ENCODE measurements at regions of chr1 and their contacts with region 1.

Region 1: DNA sequence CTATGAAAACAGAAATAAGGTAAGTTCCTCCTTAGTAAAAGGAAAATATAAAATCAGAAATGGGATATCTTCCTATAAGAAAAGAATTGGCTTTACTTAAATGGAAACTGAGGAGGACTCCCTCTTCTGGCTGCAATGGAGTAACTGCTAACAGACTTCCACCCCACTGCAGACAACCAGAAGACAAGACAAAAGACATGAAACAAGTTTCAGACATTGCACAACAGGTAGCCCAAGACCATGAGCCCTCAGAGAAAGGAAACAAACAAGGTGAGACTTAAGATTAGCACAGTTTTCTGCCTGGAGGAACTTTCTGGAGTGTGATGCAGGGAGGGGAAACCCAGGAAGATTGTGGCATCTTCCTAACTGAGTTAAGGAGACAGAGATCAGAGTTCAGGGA is 17.0 kb upstream of the OLFML2B start:
- DNase-seq: no peak
- ATAC-seq: peak; percentile 71
- H3K4me3 Mint-ChIP-seq: no peak overlapping the region
- H3K27ac Mint-ChIP-seq: no peak overlapping the region
- H3K4me1 Mint-ChIP-seq: peaks cover 3% of the 10 kb centered on the region
- H3K27me3 Mint-ChIP-seq: no peaks in the 10 kb centered on the region
- CTCF ChIP-seq: no peak

Region 2: DNA sequence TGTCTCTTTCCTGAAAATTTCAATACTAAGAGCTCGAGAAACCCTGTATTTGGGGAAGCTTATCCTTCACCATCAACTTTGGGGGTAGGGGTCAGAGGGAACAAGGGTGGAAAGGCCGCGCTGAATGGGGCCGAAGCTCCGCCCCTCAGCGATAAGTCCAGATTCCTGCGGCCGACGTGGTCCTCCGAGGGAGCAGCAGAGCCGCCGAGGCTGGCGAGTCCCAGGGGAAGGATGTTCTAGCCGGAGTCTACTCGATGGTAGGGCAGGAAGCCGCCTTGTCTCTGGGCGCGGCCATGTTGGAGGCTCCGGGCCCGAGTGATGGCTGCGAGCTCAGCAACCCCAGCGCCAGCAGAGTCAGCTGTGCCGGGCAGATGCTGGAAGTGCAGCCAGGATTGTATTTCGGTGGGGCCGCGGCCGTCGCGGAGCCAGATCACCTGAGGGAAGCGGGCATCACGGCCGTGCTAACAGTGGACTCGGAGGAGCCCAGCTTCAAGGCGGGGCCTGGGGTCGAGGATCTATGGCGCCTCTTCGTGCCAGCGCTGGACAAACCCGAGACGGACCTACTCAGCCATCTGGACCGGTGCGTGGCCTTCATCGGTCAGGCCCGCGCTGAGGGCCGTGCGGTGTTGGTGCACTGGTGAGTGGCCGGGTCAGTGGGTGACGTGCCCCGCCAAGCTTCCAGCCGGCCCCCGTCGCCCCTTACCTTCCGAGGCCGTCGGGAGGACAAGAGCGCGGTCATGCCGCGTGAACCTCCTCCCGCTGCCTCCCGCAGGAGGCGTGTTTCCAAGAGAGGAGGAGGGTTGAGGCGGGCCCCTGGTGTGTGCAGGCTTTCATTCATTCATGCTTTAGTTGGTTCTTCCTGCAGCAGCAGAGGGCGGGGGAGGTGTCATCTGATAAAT is 290.9 kb before region 1 on chr1 and contains the start of gene DUSP12:
- CTCF ChIA-PET with region 1: interaction called, 19 read pairs
- POLR2A ChIA-PET with region 1: no interaction called
- DNase-seq: peak; percentile 95
- ATAC-seq: peak; percentile 97
- H3K4me3 Mint-ChIP-seq: peak within 1 kb of the TSS; percentile 99
- H3K27ac Mint-ChIP-seq: peak within 1 kb of the TSS; percentile 99
- H3K4me1 Mint-ChIP-seq: peaks cover 15% of the 10 kb centered on the region
- H3K27me3 Mint-ChIP-seq: peaks cover 9% of the 10 kb centered on the region
- CTCF ChIP-seq: no peak
- total RNA-seq, gene DUSP12: 24.5 to 29.4 TPM (median 27.6 TPM) in 3 replicates

Region 3: DNA sequence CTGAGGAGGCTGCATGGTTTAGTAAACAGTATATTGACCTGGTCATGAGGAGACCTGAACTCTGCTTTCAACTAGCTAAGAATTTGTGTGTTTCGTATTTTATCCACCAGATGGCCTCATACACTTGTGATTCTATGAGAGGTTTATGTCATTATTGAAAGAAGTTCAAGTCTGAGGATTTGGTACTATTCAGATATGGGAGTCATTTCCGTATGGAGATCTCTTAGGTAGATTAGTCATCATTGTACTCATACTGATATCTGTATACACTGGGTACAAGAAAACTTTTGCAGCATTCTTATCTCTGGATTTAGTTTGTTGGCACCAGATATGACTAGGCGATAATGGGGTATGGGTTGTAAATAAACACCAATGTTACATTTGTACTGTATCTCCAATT is 247.9 kb before region 1 on chr1:
- CTCF ChIA-PET with region 1: interaction called, 144 read pairs
- POLR2A ChIA-PET with region 1: no interaction called
- DNase-seq: no peak
- ATAC-seq: peak; percentile 46; the same call in 1 of the 2 replicates
- H3K4me3 Mint-ChIP-seq: no peak overlapping the region
- H3K27ac Mint-ChIP-seq: no peak overlapping the region
- H3K4me1 Mint-ChIP-seq: no peaks in the 10 kb centered on the region
- H3K27me3 Mint-ChIP-seq: no peaks in the 10 kb centered on the region
- CTCF ChIP-seq: peak; percentile 26; the same call in 1 of the 2 replicates

Region 4: GRCh38 chr1:161858271-161858670 is 182.4 kb before region 1 on chr1:
- CTCF ChIA-PET with region 1: interaction called, 13 read pairs
- POLR2A ChIA-PET with region 1: no interaction called
- DNase-seq: no peak
- ATAC-seq: no peak
- H3K4me3 Mint-ChIP-seq: no peak overlapping the region
- H3K27ac Mint-ChIP-seq: no peak overlapping the region
- H3K4me1 Mint-ChIP-seq: no peaks in the 10 kb centered on the region
- H3K27me3 Mint-ChIP-seq: no peaks in the 10 kb centered on the region
- CTCF ChIP-seq: no peak

Region 5: GRCh38 chr1:161905269-161905884 is 135.3 kb before region 1 on chr1:
- CTCF ChIA-PET with region 1: interaction called, 15 read pairs
- POLR2A ChIA-PET with region 1: no interaction called
- DNase-seq: peak; percentile 41
- ATAC-seq: peak; percentile 91
- H3K4me3 Mint-ChIP-seq: no peak overlapping the region
- H3K27ac Mint-ChIP-seq: no peak overlapping the region
- H3K4me1 Mint-ChIP-seq: peaks cover 15% of the 10 kb centered on the region
- H3K27me3 Mint-ChIP-seq: no peaks in the 10 kb centered on the region
- CTCF ChIP-seq: peak; percentile 36; the same call in 1 of the 2 replicates

Region 6: DNA sequence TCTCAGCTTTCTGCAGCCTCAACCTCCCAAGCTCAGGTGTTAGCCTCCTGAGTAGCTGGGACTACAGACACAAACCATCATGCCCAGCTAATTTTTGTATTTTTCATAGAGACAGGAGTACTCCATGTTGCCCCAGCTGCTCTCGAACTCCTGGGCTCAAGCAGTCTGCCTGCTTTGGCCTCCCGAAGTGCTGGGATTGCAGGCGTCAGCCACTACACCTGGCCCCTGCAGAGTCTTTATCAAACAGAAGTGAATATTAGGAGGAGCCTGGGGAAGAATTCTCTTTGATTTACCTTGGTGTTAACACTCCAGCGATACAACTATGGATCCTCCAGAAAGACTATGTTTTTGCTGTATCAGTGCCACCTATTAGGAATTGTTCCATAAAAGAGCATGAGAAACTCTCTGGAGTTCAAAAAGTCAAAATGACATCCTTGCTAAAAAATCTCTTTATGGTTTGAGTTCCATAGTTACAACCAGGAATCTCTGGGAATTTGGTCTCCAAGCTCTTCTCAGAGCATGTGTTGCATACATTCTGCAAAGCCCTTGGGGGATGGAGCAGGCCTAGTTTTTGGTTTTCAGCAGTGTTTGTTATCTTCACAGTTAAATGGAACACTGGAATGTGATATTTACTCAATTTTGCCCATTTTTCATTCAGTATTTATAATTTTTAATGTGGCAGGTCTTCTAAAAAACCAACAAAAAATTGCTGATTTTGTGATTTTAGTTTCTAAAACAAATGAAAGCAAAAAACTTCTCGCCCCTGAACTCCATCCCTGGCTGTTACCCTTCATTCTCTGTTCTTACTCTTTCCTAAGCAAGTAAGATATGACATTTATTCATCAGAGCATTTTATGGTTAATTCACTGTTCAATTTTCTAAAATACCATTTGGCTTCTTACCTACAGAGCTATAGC is 94.4 kb before region 1 on chr1:
- CTCF ChIA-PET with region 1: interaction called, 12 read pairs
- POLR2A ChIA-PET with region 1: no interaction called
- DNase-seq: peak; percentile 29
- ATAC-seq: peak; percentile 80
- H3K4me3 Mint-ChIP-seq: no peak overlapping the region
- H3K27ac Mint-ChIP-seq: peak overlapping the region; percentile 78
- H3K4me1 Mint-ChIP-seq: peaks cover 18% of the 10 kb centered on the region
- H3K27me3 Mint-ChIP-seq: no peaks in the 10 kb centered on the region
- CTCF ChIP-seq: no peak

Region 7: DNA sequence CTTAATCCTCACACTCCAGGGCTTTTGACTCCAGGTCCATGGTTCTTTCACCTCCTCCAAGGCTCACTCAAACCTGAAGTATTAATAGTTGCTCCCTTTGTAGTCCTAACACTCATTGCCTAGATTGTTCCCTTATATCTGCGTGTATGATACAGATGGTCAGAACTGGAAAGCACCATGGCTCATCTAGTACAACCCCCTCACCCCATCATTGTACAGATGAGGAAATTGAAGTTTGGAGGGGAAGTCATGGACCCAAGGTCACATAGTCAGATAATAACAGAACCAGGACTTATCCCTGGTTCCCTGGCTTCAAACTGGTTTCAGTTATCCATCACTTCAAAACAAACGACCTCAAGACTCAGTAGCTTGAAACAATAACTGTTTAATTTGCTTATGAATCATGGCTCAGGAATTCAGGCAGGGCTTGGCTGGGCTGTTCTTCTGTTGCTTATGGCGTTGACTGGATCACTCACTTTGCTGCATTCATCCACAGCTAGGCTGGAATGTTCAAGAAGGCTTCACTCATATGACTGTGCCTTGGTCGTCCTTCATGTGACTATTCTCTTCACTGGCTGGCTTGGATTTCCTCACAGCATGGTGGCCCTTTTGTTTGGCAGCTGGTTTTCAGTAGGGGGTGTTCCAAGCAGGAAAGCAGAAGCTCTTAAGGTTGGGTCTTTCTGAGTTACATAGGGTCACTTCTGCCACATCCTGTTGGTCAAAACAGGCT is 33.8 kb after region 1 on chr1:
- CTCF ChIA-PET with region 1: no interaction called
- POLR2A ChIA-PET with region 1: no interaction called
- DNase-seq: no peak
- ATAC-seq: no peak
- H3K4me3 Mint-ChIP-seq: no peak overlapping the region
- H3K27ac Mint-ChIP-seq: no peak overlapping the region
- H3K4me1 Mint-ChIP-seq: peaks cover 60% of the 10 kb centered on the region
- H3K27me3 Mint-ChIP-seq: no peaks in the 10 kb centered on the region; the same call in none of the 2 replicates
- CTCF ChIP-seq: no peak

Measured in WTC11 (cell line).